Activated CD4-positive, alpha-beta memory T cell treated with anti-CD3 and anti-CD28 coated beads for 36 hours (primary cell): ENCODE measurements at regions of chr20 and their contacts with region 1.

Region 1: DNA sequence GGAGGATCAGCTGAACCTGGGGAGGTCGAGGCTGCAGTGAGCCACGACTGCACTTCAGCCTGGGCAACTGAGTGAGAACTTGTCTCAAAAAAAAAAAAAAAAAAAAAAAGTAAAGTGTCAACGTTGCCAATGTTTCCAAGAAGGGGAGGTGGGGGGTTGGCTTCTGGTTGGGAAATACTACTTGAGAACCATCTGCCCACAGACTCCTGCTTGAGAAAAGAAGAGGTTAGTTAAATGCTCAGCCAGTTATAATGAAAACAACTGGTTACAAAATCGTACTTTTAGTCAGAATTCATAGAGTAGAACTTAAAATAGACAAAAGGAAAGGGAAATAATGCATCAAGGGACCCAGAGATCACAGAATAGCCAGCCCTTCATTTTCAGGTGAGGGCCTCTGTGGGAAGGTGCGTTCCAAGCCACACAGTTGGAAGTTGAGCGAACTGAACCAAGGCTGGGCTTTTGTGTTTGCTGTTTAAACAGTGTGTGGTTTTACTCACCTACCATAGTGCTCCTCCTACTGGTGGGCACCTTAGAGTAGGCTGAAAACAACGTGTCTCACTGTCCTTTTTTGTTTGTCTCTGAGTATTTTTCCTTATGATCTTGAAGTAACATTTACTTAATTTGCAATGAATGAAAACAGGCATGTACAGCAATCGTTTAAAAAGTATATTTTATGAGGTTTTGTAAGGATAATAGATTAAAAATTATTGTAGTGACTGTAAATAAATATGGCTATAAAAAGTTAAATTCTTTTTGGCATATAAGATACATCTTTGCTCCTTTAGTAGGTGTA is 200.7 kb downstream of the BCAS1 start:
- DNase-seq: peak; percentile 87
- H3K4me3 Mint-ChIP-seq: peak overlapping the region; percentile 52
- H3K27ac Mint-ChIP-seq: peak overlapping the region; percentile 77
- H3K4me1 Mint-ChIP-seq: peaks cover 68% of the 10 kb centered on the region
- H3K27me3 Mint-ChIP-seq: no peaks in the 10 kb centered on the region

Region 2: GRCh38 chr20:53660078-53660909 is 209.4 kb before region 1 on chr20:
- CTCF ChIA-PET with region 1: no interaction called
- POLR2A ChIA-PET with region 1: no interaction called
- intact Hi-C with region 1: loop called (anchors 1 kb)
- DNase-seq: peak; percentile 58
- H3K4me3 Mint-ChIP-seq: peak overlapping the region; percentile 78
- H3K27ac Mint-ChIP-seq: peak overlapping the region; percentile 83
- H3K4me1 Mint-ChIP-seq: peaks cover 55% of the 10 kb centered on the region
- H3K27me3 Mint-ChIP-seq: no peaks in the 10 kb centered on the region

Region 3: DNA sequence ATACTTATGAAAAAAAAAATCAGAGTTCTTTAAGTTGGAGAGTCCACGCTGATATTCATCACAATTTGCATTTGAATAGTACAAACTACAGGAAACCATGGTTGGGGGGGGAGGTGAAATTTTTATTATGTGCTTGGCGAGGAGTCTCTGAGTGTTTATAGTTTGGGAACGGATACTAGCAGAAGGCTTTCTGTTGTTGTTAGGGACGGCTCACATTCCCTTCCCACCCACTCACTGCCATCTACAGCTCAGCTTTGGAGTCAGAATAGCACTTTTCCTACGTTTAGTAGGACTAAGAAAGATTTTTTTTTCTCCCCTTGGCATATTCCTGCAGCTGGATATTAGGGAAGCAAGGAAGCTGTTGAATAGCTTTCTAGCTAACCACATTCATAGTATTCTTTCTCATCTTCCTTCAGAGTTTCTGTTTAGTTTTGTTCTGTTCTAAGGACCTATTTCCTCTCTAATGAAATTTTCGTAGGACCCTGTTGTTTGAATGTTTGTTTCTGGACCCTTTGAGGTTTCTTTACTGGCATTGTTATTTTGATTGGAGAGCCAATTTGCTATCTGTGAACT is 40.9 kb before region 1 on chr20:
- CTCF ChIA-PET with region 1: no interaction called
- POLR2A ChIA-PET with region 1: no interaction called
- intact Hi-C with region 1: loop called (anchors 5 kb)
- DNase-seq: no peak
- H3K4me3 Mint-ChIP-seq: peak overlapping the region; percentile 76
- H3K27ac Mint-ChIP-seq: peak overlapping the region; percentile 71
- H3K4me1 Mint-ChIP-seq: peaks cover 41% of the 10 kb centered on the region
- H3K27me3 Mint-ChIP-seq: no peaks in the 10 kb centered on the region

Region 4: DNA sequence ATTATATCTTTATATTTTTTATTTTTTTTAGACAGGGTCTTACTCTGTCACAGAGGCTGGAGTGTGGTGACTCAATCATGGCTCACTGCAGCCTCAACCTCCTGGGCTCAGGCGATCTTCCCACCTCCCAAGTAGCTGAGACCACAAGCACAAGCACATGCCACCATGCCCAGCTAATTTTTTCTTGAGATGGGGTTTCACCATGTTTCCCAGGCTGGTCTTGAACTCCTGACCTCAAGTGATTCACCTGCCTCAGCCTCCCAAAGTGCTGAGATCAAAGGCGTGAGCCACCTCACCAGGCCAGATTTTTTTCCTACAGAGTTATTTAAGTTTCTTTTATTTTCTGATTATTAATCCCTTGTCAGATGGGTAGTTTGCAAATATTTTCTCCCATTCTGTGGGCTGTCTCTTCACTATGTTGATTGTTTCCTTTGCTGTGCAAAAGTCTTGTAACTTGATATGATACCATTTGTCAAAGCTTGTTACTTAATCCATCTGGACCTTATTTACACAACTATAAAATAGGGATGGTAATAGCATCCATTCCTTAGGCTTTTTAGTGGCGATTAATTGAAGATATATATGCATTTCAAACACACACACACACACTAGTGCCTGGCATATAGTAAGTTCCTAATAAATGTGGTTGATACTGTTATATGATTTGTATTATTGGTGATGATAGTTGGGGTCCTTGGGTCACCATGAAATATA is 13.6 kb after region 1 on chr20:
- CTCF ChIA-PET with region 1: interaction called, 8 read pairs
- POLR2A ChIA-PET with region 1: interaction called, 4 read pairs
- intact Hi-C with region 1: loop called (anchors 1 kb)
- DNase-seq: peak; percentile 33
- H3K4me3 Mint-ChIP-seq: no peak overlapping the region
- H3K27ac Mint-ChIP-seq: no peak overlapping the region
- H3K4me1 Mint-ChIP-seq: peaks cover 31% of the 10 kb centered on the region
- H3K27me3 Mint-ChIP-seq: no peaks in the 10 kb centered on the region

Region 5: DNA sequence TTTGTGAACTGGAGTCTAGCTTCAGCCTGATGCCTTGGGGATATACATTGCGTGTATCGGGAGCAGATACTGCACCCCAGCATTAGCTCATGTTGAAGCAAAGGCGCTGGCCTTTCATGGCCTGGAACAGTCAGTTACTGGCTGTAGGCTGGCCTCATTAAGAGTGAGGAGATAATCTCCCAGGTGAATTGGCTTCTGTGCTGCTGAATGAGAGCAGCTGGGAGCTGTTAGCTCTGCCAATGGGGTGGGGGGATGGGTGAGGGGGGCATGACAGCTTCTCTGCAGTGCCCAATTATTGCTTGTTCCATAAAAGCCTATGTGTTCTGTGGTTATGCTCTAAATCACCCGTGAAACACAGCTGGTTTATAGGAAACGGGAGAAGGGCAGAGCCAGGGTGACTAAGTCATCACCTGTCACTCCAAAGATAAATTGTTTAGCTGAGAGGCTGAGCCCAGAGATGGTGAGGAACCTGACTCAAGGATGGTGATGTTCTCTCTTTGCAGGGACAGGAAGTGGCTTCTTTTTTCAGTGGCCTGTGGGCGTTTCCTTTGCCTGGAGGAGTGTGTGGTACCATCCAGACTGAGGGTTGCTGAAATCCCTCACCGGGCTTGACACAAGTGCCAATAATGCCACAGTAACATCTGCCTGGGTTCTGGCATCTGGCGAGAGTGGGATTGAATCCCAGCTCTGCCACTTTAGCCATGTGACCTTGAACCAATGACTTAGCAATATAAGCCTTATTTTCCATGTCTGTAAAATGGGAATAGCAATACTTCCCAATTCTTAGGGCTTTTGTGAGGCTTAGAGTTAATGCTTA is 29.9 kb after region 1 on chr20:
- CTCF ChIA-PET with region 1: interaction called, 6 read pairs
- POLR2A ChIA-PET with region 1: interaction called, 4 read pairs
- intact Hi-C with region 1: loop called (anchors 1 kb)
- DNase-seq: peak; percentile 92
- H3K4me3 Mint-ChIP-seq: no peak overlapping the region
- H3K27ac Mint-ChIP-seq: peak overlapping the region; percentile 77
- H3K4me1 Mint-ChIP-seq: peaks cover 45% of the 10 kb centered on the region
- H3K27me3 Mint-ChIP-seq: no peaks in the 10 kb centered on the region